Cardiac septum (tissue), 1 donor: ENCODE measurements at regions of chr4 and their contacts with region 1.

Region 1: GRCh38 chr4:94451695-94452475 is at the start of gene PDLIM5:
- DNase-seq: peak; percentile 97
- total RNA-seq, gene PDLIM5: 1,256 TPM

Region 2: DNA sequence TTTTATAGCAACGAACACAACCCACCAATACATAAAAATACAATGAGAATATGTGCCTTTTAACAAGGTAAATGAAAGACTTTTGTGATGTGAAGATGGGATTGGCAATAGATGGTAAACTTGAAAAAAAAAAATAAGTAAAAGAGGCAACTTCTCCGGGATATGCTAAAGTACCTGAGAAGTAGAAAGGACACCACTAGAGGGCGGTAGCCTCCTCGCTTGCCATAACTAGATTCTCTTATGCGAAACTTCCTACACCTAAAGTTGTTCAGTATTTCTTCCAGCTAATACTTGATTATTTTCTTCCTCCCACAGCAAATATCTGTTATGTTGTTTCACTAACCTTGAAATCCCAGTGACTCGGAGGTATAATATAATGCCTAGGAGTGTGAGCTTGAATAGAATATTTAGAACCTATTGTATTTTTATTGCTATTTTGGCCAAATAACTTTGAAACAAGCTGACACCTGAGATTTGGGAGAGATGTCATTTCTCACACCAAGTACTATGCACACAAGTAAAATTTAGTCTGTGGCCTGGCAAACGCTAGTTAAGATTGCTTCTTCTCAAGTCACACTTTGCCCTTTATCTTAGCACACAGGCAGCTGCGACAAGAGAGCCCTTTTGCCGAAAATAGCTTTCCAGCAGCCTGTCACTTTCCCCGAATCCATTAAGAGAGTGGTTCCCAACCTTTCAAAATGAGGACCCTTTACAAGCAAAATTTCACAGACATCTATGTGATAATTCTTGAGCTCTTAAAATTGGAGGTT is 45.0 kb before region 1 on chr4:
- intact Hi-C with region 1: loop called (anchors 2 kb)
- DNase-seq: no peak

Region 3: GRCh38 chr4:94412658-94413038 is 39.2 kb before region 1 on chr4:
- intact Hi-C with region 1: loop called (anchors 2 kb)
- DNase-seq: no peak

Region 4: GRCh38 chr4:94561249-94562024 is 109.6 kb after region 1 on chr4:
- intact Hi-C with region 1: loop called (anchors 5 kb)
- DNase-seq: no peak

Region 5: GRCh38 chr4:94590493-94590892 is 138.6 kb after region 1 on chr4:
- intact Hi-C with region 1: loop called (anchors 5 kb)
- DNase-seq: no peak

Region 6: GRCh38 chr4:94827481-94828110 is 375.7 kb after region 1 on chr4:
- intact Hi-C with region 1: no loop called
- DNase-seq: no peak

Region 7: GRCh38 chr4:94913316-94913715 is 461.4 kb after region 1 on chr4:
- intact Hi-C with region 1: no loop called
- DNase-seq: no peak